ENCODE measurements at regions of chr19 and their contacts with region 1.

Region 1: DNA sequence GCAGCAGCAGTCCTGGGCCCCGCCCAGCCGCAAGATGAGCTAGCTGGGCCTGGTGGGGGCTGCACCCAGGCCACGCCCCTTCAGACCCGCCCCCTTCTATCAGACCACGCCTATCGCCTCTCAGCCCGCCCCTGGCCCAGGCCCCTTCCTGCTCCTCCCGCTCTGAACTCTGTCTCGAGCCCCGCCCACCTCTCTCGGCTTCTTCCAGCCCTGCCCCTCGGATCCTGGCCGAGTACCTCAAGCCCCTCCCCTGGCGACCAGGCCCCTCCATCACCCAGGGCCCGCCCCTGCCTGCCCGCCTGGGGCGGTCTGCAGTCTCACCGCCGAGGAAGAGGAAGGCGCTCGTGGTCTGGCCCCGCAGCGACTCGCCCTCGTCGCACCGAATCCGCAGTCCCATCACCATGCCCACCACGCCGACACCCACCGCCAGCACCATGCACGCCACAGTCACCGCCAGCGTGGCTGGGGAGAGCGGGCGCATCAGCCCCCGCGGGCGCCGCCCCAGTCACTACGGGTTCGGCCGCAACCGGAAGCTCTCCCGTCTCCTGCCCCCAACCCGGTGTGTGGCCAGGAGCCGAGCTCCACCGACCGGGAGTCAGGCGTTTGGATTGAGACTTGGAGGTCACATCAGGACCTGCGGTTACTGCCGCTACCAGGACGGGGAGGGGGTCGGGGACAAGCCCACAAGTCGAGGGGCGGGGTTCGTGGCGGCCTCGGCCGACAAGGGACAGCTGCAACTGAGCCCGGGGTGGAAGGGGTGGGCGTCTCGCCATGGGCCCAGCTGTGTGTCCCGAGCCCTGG is 1.0 kb downstream of the CLDND2 start:
- DNase-seq: peak; percentile 100
- ATAC-seq: peak; percentile 94

Region 2: DNA sequence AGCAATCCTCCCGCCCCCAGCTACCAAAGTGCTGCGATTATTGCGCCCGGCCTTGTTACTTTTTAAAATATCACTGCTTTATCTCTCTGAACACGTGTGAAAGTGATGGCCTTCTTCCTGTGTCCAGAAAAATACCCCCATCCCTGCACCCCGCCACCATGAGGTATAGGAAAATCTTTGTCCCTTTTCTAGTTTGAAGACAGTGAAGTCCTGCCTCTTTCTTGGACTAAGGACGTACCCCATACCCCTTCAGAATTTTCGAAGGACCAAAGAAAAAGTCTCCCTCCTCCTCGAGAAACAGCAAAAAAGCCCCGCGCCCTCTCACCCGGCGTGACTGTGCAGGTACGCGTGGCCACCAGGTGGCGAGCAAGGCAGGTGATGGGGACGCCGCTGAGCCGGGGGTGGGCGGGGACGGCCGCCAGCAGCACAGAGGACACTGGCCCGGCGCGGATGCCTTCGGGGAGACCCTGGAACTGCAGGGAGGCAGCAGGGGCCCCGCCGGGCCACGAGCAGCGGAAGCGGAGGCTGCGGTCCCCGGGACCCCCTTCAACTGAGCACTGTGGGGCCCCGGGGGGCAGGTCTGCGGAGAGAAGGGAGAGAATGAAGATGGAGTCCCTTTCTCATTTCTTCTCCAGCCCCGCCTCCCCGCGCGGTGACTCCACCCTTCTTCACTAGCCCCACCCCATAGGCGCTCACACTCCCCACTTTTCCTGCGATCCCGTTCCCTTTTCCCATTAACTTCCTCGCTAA is 29.0 kb before region 1 on chr19:
- intact Hi-C with region 1: loop called (anchors 1 kb)
- DNase-seq: peak; percentile 91
- ATAC-seq: peak; percentile 72

Region 3: GRCh38 chr19:51393959-51394836 is 26.4 kb after region 1 on chr19:
- intact Hi-C with region 1: loop called (anchors 1 kb)
- DNase-seq: peak; percentile 95
- ATAC-seq: peak; percentile 98

Region 4: DNA sequence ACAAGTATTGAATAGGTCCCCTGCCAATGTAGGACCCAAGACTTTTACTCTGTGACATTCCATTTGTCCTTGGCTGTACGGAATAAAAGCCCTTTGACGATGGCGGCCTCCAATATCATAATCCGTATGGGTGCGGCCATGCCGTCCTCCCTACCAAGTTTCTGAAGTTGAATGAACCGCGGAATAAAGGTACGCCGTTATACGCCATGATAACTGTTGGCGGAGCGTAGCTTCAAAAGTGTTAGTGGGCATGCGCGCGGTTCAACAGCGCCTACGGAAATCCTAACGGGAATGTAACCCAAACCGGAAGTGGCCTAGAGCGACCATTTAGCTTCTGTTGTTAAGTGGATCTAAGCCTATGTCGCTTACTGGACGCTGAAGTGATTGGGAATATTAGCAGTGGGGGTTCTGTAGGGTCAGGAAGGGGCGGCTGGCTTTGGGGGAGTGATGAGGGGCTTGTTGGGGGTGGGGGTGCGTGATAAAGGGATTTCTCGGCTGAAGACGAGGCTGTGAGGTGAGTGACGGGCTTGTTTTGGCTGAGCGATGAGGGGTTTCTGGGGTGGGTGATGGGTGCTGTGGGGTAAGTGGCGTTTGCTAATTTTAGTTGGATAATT is 203.3 kb after region 1 on chr19 and contains the start of gene ZNF175:
- intact Hi-C with region 1: loop called (anchors 5 kb)
- DNase-seq: peak; percentile 93
- ATAC-seq: peak; percentile 99
- total RNA-seq, gene ZNF175: 7.4 TPM

Region 5: GRCh38 chr19:51688672-51689571 is 321.2 kb after region 1 on chr19:
- intact Hi-C with region 1: loop called (anchors 2 kb)
- DNase-seq: peak; percentile 91
- ATAC-seq: peak; percentile 90

Region 6: GRCh38 chr19:51800473-51801244 is 432.9 kb after region 1 on chr19:
- intact Hi-C with region 1: loop called (anchors 2 kb)
- DNase-seq: peak; percentile 88
- ATAC-seq: peak; percentile 78